ENCODE measurements at regions of chr20 and their contacts with region 1.

Region 1: DNA sequence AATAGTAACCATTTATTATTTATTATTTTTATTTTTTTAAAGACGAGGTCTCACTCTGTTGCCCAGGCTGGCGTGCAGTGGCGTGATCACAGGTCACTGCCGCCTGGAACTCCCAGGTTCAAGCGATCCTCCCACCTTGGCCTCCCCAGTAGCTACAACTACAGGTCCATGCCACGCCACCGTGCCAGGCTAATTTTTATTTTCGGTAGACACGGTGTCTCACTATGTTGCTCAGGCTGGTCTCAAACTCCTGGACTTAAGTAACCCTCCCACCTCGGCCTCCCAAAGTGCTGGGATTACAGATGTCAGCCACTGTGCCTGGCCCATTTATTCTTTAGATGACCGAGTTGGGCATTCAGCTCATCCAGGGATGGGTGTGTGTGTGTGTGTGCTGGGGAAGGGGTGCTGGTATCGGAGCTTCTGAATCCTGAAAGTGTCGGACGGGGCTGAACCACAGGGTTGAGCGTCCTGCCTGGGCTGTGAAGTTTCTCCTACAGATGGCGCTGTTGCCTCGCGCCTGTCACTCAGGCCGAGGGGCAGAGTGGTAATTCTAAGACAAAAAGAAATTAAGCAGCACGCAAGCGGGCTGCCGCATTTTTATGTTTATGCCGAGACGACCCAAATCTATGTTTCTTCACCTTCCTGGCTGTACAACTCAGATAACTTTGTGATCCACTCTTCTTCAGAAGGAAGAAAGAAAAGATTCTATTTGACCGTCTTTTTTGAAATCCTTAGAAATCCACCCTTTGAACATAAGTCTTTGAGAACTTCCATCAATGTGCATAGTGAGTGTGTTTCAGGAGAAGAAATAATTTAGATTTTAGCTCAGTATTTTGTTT is 252.8 kb downstream of the CDH26 start:
- DNase-seq: peak; percentile 36
- H3K4me3 ChIP-seq: no peak overlapping the region
- H3K27ac ChIP-seq: no peak overlapping the region
- H3K4me1 ChIP-seq: no peaks in the 10 kb centered on the region
- H3K27me3 ChIP-seq: peaks cover 2% of the 10 kb centered on the region
- CTCF ChIP-seq: peak; percentile 94 to 97

Region 2: DNA sequence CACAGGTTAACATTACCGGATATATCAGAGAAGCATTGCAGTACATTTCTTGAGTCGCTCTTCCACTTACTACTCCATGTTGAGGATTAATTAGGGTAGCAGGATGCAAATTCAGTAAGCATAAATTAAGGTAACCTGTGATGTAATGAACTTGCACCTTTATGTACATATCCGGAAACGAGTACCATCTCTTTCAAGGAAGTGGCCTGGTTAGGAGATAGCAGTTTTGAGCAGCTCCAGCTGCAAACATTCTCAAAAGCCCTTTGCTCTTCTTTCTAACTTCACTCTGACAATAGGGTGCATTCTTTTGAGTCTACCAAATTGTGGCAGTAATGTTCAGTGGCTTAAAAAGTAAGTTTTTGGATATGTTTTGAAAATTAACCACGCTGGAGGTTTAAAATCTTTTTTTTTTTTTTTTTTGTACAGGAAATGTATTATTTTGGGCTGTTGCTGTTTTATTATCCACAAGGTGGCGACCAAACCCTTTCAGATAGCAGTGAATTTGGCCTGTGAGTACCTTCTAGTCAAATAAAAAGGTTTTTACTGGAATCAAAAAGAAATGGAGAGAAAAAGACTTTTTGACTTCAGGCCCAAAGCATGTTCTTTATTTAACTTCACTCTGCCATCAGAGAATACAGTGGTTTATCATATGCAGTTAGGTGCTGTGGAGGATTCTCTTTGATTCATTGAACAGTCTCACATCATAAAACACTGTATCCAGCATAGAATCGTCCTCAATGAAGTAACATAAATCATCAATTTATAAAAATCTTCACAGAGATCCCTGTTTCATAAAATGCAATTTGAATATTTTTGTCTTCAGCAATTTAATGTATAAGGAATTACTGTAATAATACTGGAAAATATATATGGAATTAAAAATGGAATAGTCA is 261.9 kb before region 1 on chr20:
- CTCF ChIA-PET with region 1: no interaction called
- dilution Hi-C with region 1: no loop called
- in situ Hi-C with region 1: no loop called
- intact Hi-C with region 1: loop called (anchors 2 kb)
- DNase-seq: peak; percentile 37
- H3K4me3 ChIP-seq: no peak overlapping the region
- H3K27ac ChIP-seq: no peak overlapping the region
- H3K4me1 ChIP-seq: peaks cover 5% of the 10 kb centered on the region
- H3K27me3 ChIP-seq: no peaks in the 10 kb centered on the region
- CTCF ChIP-seq: peak; percentile 65 to 70

Region 3: DNA sequence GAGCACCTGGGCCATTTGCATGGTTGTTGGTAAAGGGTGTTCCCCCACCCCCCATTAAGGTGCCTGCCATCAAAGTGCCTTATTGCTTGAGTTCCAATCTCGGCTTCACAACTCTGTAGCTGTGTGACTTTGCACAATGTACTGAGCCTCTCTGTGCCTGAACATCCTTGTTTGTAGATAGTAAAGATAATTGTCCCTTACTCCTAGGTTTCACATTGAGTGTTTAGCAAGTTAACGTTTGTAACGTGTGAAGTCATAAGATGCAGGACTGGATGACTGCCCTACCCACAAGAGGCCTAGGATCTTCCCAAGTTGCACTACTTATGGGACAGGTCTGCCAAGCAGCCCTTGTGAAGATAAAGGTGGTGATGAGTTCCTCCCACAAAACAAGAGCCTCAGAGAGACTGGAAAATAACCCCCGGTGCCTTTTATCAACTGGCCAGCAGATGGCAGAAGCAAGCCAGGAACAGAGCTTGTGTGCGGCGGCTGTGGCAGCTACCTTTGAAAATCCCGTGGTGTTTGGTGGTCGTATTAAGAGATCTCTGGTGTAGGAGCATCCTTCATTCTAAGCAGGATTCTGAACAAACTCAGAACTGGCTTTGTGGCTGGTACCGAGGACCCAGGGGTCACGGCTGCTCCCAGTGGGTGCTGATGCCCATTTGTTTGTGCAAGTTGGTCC is 153.7 kb before region 1 on chr20:
- CTCF ChIA-PET with region 1: no interaction called
- dilution Hi-C with region 1: no loop called
- in situ Hi-C with region 1: loop called in 1 of 2 experiments (anchors 25 kb)
- intact Hi-C with region 1: loop called (anchors 1 kb)
- DNase-seq: peak; percentile 65
- H3K4me3 ChIP-seq: peak overlapping the region in 1 of 3 experiments; percentile 58
- H3K27ac ChIP-seq: no peak overlapping the region
- H3K4me1 ChIP-seq: peaks cover 63% of the 10 kb centered on the region
- H3K27me3 ChIP-seq: no peaks in the 10 kb centered on the region
- CTCF ChIP-seq: peak; percentile 90

Region 4: GRCh38 chr20:60180986-60181385 is 30.0 kb before region 1 on chr20:
- CTCF ChIA-PET with region 1: no interaction called
- dilution Hi-C with region 1: no loop called
- in situ Hi-C with region 1: no loop called
- intact Hi-C with region 1: no loop called
- DNase-seq: no peak
- H3K4me3 ChIP-seq: no peak overlapping the region
- H3K27ac ChIP-seq: no peak overlapping the region
- H3K4me1 ChIP-seq: no peaks in the 10 kb centered on the region
- H3K27me3 ChIP-seq: no peaks in the 10 kb centered on the region
- CTCF ChIP-seq: no peak

Region 5: DNA sequence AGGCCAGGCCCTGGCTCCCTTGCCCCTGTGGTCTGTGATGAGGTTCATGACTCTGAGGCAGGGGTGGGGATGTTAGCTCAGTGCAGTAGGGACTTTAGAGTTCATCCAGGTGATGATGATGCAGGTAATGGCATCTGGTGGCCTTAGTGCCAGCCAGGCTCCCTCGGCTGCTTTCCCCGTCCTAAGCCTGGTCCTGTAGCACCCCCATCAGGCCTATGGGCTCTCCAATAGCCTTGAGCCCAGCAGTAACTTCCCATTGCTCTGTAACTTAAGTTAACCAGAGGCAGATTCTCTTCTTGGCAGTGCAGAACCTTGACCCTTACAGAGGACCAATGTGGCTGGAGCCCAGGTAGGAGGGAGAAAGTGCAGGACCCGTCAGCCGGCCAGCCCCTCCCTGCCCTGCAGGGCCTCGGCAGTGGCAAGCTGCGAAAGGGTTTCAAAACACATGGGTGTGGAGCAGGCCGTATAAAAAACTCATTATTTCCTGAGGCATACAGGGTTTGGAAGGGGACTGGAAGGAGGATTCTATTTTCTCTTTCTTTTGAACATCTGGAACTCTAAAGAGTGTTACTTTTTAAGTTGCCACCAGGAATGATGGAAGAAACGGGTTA is 154.2 kb after region 1 on chr20:
- CTCF ChIA-PET with region 1: no interaction called
- dilution Hi-C with region 1: no loop called
- in situ Hi-C with region 1: no loop called
- intact Hi-C with region 1: loop called (anchors 5 kb)
- DNase-seq: no peak
- H3K4me3 ChIP-seq: no peak overlapping the region
- H3K27ac ChIP-seq: no peak overlapping the region
- H3K4me1 ChIP-seq: no peaks in the 10 kb centered on the region
- H3K27me3 ChIP-seq: no peaks in the 10 kb centered on the region
- CTCF ChIP-seq: peak; percentile 30 to 40

Region 6: DNA sequence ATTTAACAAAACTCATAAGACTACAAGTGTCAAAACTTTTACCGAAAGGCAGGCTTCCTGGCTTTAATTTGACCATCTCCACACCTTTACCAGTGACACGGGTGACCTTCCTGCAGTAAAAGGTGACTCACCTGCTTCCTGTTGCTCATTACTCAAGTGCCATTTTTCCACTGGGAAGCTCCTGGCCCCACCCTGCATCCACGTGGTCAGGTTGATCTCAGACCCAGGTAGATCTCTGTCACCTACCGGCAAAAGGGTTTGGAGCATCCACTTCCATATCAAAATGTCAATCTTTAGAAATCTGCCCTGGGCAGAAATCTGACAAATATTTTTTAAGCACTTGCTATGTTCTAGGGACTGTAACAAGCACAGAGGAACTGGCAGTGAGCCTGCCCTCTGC is 1009.2 kb after region 1 on chr20:
- CTCF ChIA-PET with region 1: no interaction called
- dilution Hi-C with region 1: no loop called
- in situ Hi-C with region 1: no loop called
- intact Hi-C with region 1: loop called (anchors 10 kb)
- DNase-seq: peak; percentile 2
- H3K4me3 ChIP-seq: no peak overlapping the region
- H3K27ac ChIP-seq: no peak overlapping the region
- H3K4me1 ChIP-seq: peaks cover 7% of the 10 kb centered on the region
- H3K27me3 ChIP-seq: peaks cover 3% of the 10 kb centered on the region
- CTCF ChIP-seq: no peak